ENCODE measurements at regions of chr3 and their contacts with region 1.

Region 1: DNA sequence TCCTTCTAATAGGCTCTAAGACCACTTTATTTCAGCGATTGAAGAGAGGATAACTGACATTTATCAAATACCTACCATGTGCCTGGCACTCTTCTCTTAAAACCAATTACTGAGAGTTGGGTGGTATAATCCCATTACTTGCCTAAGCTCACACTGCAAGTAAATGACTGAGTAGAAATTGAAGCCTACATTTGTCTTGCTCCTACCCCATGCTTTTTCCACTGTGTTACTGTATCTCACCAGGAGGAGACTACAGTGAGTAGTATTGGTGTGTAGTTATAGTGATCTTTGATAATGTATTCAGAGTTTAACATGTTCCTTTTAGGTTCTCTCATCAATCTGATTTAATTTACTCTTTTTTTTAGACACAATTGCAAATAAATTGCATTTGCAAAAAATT is 20.7 kb downstream of the EIF2A start:
- DNase-seq: no peak
- ATAC-seq: no peak
- H3K4me3 ChIP-seq: no peak overlapping the region
- H3K27ac ChIP-seq: no peak overlapping the region
- H3K4me1 ChIP-seq: no peaks in the 10 kb centered on the region
- H3K27me3 ChIP-seq: no peaks in the 10 kb centered on the region
- CTCF ChIP-seq: no peak
- POLR2A ChIP-seq: no peak
- RAD21 ChIP-seq: no peak

Region 2: GRCh38 chr3:150319904-150320303 is 247.4 kb before region 1 on chr3:
- CTCF ChIA-PET with region 1: no interaction called
- POLR2A ChIA-PET with region 1: no interaction called
- dilution Hi-C with region 1: no loop called
- in situ Hi-C with region 1: no loop called
- intact Hi-C with region 1: no loop called
- DNase-seq: peak; percentile 96
- ATAC-seq: peak; percentile 94
- H3K4me3 ChIP-seq: no peak overlapping the region
- H3K27ac ChIP-seq: no peak overlapping the region
- H3K4me1 ChIP-seq: peaks cover 7% of the 10 kb centered on the region
- H3K27me3 ChIP-seq: no peaks in the 10 kb centered on the region
- CTCF ChIP-seq: no peak
- POLR2A ChIP-seq: no peak
- RAD21 ChIP-seq: no peak

Region 3: DNA sequence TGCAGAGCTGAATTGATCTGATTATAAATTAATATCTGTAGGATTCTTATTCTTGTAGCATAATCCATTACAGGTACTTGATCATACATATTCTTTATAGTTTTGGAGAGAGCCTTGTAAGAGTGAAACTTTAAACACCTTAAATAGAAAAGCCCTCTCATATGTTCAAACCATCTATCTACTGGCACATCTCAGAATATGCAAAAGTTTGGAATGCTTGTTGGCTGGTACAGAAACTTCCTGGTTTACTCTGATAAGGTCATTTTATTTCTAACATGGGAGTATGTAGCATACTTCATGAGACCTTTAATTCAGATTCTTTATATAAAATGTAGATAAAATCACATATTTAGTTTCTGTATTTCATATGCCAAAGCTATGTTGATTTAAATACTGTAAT is 13.8 kb after region 1 on chr3:
- CTCF ChIA-PET with region 1: no interaction called
- POLR2A ChIA-PET with region 1: no interaction called
- dilution Hi-C with region 1: no loop called
- in situ Hi-C with region 1: no loop called
- intact Hi-C with region 1: loop called (anchors 2 kb)
- DNase-seq: no peak
- ATAC-seq: no peak
- H3K4me3 ChIP-seq: no peak overlapping the region
- H3K27ac ChIP-seq: no peak overlapping the region
- H3K4me1 ChIP-seq: no peaks in the 10 kb centered on the region
- H3K27me3 ChIP-seq: no peaks in the 10 kb centered on the region
- CTCF ChIP-seq: no peak
- POLR2A ChIP-seq: no peak
- RAD21 ChIP-seq: no peak

Measured in IMR-90 (cell line).